Pancreas (tissue), 10 donors: ENCODE measurements at regions of chr18 and their contacts with region 1.

Region 1: DNA sequence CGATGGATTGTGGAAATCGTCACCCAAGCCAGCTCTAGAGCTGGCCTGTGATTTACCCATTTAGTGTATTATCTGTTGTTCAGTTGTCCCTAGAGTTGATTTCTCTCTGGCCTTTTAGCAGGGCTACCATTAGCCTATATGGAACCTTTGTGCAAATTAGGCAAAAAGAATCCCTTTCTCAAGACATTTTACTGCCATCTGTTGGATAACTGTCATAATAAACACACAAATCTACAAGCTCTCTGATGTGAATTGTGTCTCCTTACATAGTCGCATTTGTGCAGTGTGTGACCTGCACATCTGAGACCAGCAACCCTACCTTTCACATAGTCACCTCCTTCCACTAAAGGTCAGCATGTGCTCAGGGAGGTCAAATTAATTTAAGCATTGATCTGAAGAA is 34.0 kb downstream of the LOXHD1 start:
- DNase-seq: no peak
- ATAC-seq: no peak
- H3K4me3 ChIP-seq: no peak overlapping the region
- H3K27ac ChIP-seq: no peak overlapping the region
- H3K4me1 ChIP-seq: no peaks in the 10 kb centered on the region
- H3K27me3 ChIP-seq: no peaks in the 10 kb centered on the region
- CTCF ChIP-seq: no peak

Region 2: GRCh38 chr18:45608400-45608799 is 1014.6 kb before region 1 on chr18:
- intact Hi-C with region 1: no loop called
- DNase-seq: no peak
- ATAC-seq: no peak
- H3K4me3 ChIP-seq: no peak overlapping the region
- H3K27ac ChIP-seq: no peak overlapping the region
- H3K4me1 ChIP-seq: no peaks in the 10 kb centered on the region
- H3K27me3 ChIP-seq: no peaks in the 10 kb centered on the region
- CTCF ChIP-seq: no peak

Region 3: GRCh38 chr18:46680784-46681695 is 58.0 kb after region 1 on chr18:
- intact Hi-C with region 1: loop called in 1 of 3 experiments (anchors 10 kb)
- DNase-seq: no peak
- ATAC-seq: no peak
- H3K4me3 ChIP-seq: no peak overlapping the region
- H3K27ac ChIP-seq: no peak overlapping the region
- H3K4me1 ChIP-seq: no peaks in the 10 kb centered on the region
- H3K27me3 ChIP-seq: no peaks in the 10 kb centered on the region
- CTCF ChIP-seq: no peak

Region 4: DNA sequence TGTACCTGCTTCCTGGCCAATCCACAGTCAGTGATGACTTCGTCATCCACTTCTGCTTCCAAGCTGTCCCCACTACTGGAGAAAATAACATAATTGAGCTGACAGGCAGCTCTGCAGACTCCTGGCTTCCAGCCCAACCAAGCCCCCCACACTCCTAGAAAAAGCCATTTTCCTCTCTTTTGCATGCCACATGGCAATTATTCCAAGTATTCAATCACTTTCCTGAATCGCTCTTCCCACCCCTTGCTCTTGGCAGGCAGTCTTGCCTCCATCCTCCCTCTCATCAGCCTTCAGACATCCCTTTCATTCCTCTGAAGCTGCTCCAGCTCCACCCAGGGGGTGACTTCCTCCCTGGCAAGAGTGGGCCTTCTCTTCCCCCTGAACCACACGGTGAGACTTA is 148.1 kb after region 1 on chr18:
- intact Hi-C with region 1: no loop called
- DNase-seq: no peak
- ATAC-seq: no peak
- H3K4me3 ChIP-seq: no peak overlapping the region
- H3K27ac ChIP-seq: no peak overlapping the region
- H3K4me1 ChIP-seq: no peaks in the 10 kb centered on the region
- H3K27me3 ChIP-seq: no peaks in the 10 kb centered on the region
- CTCF ChIP-seq: no peak